Esophagus muscularis mucosa (tissue), 4 donors: ENCODE measurements at regions of chr20 and their contacts with region 1.

Region 1: GRCh38 chr20:8756410-8756809 is 312.5 kb upstream of the PLCB4 start:
- DNase-seq: no peak
- H3K4me3 ChIP-seq: no peak overlapping the region
- H3K27ac ChIP-seq: peak overlapping the region in 3 of 4 donors; percentile 25 to 48 (median 36)
- H3K4me1 ChIP-seq: peaks cover 0 to 24% (median 20%) of the 10 kb centered on the region in 4 donors
- H3K27me3 ChIP-seq: no peaks in the 10 kb centered on the region
- CTCF ChIP-seq: no peak
- EP300 ChIP-seq: no peak
- POLR2A ChIP-seq: no peak

Region 2: DNA sequence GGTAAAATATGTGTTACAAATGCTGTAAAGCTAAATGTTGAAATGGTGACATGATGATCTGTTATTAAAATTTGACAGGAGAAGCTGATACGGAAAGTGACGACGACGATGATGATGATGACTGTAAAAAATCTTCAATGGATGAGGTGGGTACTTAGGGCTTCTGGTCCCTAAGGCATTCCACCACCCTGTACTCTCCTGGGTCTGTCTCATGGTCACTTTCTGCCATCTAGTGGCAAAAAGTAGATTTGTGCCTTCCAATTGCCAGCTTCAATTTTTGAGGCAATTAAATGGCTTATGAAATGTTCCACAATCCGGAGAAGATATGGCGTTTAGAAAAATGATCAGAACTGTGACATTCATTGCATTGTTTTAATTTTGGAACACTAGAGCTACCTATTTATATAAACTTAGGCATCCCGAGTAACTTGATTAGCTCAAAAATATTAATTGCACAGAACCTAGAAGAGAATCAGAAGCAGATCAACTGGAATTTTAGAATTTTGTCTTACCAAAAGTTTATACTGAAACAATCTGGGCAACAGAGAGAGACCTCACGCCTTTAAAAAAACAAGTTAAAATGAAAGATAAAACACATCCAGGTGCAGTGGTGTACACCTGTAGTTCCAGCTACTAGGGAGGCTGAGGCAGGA is 34.0 kb before region 1 on chr20:
- intact Hi-C with region 1: no loop called
- DNase-seq: no peak
- H3K4me3 ChIP-seq: no peak overlapping the region
- H3K27ac ChIP-seq: no peak overlapping the region
- H3K4me1 ChIP-seq: peaks cover 4 to 21% (median 14%) of the 10 kb centered on the region in 4 donors
- H3K27me3 ChIP-seq: no peaks in the 10 kb centered on the region
- CTCF ChIP-seq: peak; percentile 76 to 81 (median 77)
- EP300 ChIP-seq: no peak
- POLR2A ChIP-seq: no peak

Region 3: GRCh38 chr20:9359561-9360308 is 603.3 kb after region 1 on chr20:
- intact Hi-C with region 1: loop called (anchors 5 kb)
- DNase-seq: no peak
- H3K4me3 ChIP-seq: no peak overlapping the region
- H3K27ac ChIP-seq: peak overlapping the region in 1 of 4 donors; percentile 37
- H3K4me1 ChIP-seq: peaks cover 8 to 37% (median 29%) of the 10 kb centered on the region in 4 donors
- H3K27me3 ChIP-seq: no peaks in the 10 kb centered on the region
- CTCF ChIP-seq: peak; percentile 50 to 54 (median 53)
- EP300 ChIP-seq: no peak
- POLR2A ChIP-seq: no peak

Region 4: DNA sequence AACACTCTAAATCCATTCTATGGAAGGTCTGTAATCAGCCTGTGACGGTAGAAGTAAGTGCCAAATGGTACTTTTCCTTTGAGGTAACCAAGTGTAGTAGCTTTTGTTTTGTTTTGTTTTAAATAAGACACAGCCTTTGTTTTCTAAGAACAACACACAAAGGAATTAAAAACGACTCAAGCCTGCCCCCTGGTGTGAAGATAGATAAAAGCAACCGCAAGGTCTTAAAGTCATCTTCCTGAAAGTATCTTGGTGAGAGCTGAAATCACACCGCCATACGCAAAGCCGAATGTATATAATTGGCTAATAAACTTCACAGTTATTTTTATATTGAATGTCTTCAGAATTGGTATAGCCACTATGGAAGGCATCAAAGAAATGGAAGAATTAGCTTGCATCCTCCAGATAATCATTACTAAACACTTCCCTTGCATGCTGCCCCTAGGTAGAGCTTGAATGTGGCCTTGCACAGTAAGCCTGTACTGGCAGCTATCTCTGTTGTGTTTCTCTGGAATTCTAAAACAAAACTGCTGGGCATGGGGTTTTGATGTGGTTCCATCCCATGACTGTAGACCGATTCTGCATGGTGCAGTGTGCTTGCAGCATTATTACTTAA is 853.6 kb after region 1 on chr20:
- intact Hi-C with region 1: loop called (anchors 10 kb)
- DNase-seq: peak; percentile 86
- H3K4me3 ChIP-seq: no peak overlapping the region
- H3K27ac ChIP-seq: no peak overlapping the region
- H3K4me1 ChIP-seq: no peaks in the 10 kb centered on the region
- H3K27me3 ChIP-seq: no peaks in the 10 kb centered on the region
- CTCF ChIP-seq: peak; percentile 56 to 76 (median 64)
- EP300 ChIP-seq: no peak
- POLR2A ChIP-seq: no peak